ENCODE measurements at regions of chr3 and their contacts with region 1.

Region 1: GRCh38 chr3:143121241-143122088 is 1.9 kb downstream of the CHST2 start:
- DNase-seq: peak; percentile 90
- H3K4me3 ChIP-seq: peak overlapping the region; percentile 67 to 85 (median 70)
- H3K27ac ChIP-seq: no peak overlapping the region
- H3K4me1 ChIP-seq: peaks cover 10 to 39% (median 28%) of the 10 kb centered on the region in 4 donors
- H3K27me3 ChIP-seq: peaks cover 0 to 27% (median 3%) of the 10 kb centered on the region in 4 donors
- CTCF ChIP-seq: peak; percentile 27 to 43 (median 33)
- EP300 ChIP-seq: no peak
- POLR2A ChIP-seq: no peak

Region 2: GRCh38 chr3:143644370-143645089 is 523.1 kb after region 1 on chr3:
- intact Hi-C with region 1: loop called (anchors 2 kb)
- DNase-seq: no peak
- H3K4me3 ChIP-seq: no peak overlapping the region
- H3K27ac ChIP-seq: no peak overlapping the region
- H3K4me1 ChIP-seq: peaks cover 0 to 14% (median 11%) of the 10 kb centered on the region in 4 donors
- H3K27me3 ChIP-seq: no peaks in the 10 kb centered on the region
- CTCF ChIP-seq: peak; percentile 62 to 69 (median 68)
- EP300 ChIP-seq: no peak
- POLR2A ChIP-seq: no peak

Region 3: DNA sequence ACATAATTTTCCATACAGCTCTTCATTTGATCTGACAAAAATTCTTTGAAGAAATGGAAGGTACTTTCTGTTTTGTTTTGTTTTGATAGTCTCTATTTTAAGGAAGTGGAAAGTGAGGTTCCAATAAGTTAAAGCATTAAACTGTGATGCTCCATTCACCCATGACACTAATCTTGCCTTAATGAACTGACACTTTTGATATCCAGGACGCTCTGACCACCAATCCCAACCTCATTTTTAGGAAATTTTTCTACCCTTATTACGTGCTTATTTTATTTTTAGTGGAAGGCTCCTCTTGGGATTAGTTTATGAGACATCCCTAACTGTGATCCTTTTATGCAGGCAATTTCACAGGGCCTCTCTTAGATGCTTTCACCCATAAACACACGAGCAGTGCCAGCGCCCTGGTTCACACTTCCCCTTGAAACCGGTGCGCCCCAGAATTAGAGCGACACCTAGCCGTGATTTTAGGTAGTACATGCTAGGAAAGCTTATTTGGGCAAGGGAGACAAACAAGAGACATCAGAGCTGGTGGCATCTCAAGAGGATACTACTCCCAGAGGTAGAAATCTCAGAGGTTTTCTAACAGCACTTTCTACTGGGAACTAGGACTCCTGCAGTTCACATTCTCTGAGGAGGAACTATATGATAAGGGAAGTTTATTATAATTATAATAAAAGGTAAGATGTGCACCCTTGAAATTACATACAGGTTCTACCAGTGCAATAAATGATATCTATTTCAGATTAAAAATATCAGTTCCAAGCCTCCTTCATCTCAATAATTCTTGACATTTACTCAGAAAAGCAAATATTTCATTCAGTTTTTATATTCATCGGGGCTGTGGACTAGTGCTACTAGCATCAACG is 552.9 kb after region 1 on chr3:
- intact Hi-C with region 1: loop called (anchors 10 kb)
- DNase-seq: peak; percentile 93
- H3K4me3 ChIP-seq: no peak overlapping the region
- H3K27ac ChIP-seq: no peak overlapping the region
- H3K4me1 ChIP-seq: peaks cover 0 to 6% (median 2%) of the 10 kb centered on the region in 4 donors
- H3K27me3 ChIP-seq: no peaks in the 10 kb centered on the region
- CTCF ChIP-seq: peak; percentile 81 to 99 (median 84)
- EP300 ChIP-seq: no peak
- POLR2A ChIP-seq: no peak